K562 (cell line): ENCODE measurements at regions of chr20 and their contacts with region 1.

Region 1: GRCh38 chr20:478949-479429 is 16.7 kb upstream of the TBC1D20 start:
- DNase-seq: peak; percentile 26 to 67 (median 28)
- ATAC-seq: peak; percentile 88
- H3K4me3 ChIP-seq: no peak overlapping the region
- H3K27ac ChIP-seq: no peak overlapping the region
- H3K4me1 ChIP-seq: no peaks in the 10 kb centered on the region; a peak in 1 of 5 replicates
- H3K27me3 ChIP-seq: no peaks in the 10 kb centered on the region
- CTCF ChIP-seq: peak; percentile 27 to 65 (median 52); a peak in 4 of 6 replicates
- EP300 ChIP-seq: no peak
- POLR2A ChIP-seq: no peak
- RAD21 ChIP-seq: peak; percentile 68 to 71

Region 2: GRCh38 chr20:431012-431904 is 47.7 kb before region 1 on chr20:
- CTCF ChIA-PET with region 1: interaction called, 10 read pairs
- POLR2A ChIA-PET with region 1: no interaction called
- in situ Hi-C with region 1: no loop called
- intact Hi-C with region 1: loop called (anchors 1 kb)
- DNase-seq: peak; percentile 29 to 71 (median 48)
- ATAC-seq: peak; percentile 73
- H3K4me3 ChIP-seq: no peak overlapping the region
- H3K27ac ChIP-seq: no peak overlapping the region; the same call in 2 of the 3 replicates
- H3K4me1 ChIP-seq: peaks cover 0 to 20% of the 10 kb centered on the region in 2 experiments; a peak in 2 of 5 replicates
- H3K27me3 ChIP-seq: no peaks in the 10 kb centered on the region
- CTCF ChIP-seq: peak; percentile 77 to 98 (median 92)
- EP300 ChIP-seq: no peak
- POLR2A ChIP-seq: no peak
- RAD21 ChIP-seq: peak; percentile 73 to 74

Region 3: GRCh38 chr20:634556-634955 is 155.6 kb after region 1 on chr20:
- CTCF ChIA-PET with region 1: no interaction called
- POLR2A ChIA-PET with region 1: no interaction called
- in situ Hi-C with region 1: no loop called
- intact Hi-C with region 1: no loop called
- DNase-seq: no peak
- ATAC-seq: no peak
- H3K4me3 ChIP-seq: no peak overlapping the region
- H3K27ac ChIP-seq: no peak overlapping the region
- H3K4me1 ChIP-seq: no peaks in the 10 kb centered on the region; a peak in 2 of 5 replicates
- H3K27me3 ChIP-seq: peaks cover 0 to 23% of the 10 kb centered on the region in 2 experiments; a peak in 2 of 5 replicates
- CTCF ChIP-seq: no peak
- EP300 ChIP-seq: no peak
- POLR2A ChIP-seq: no peak
- RAD21 ChIP-seq: no peak